Posterior vena cava (tissue), 2 donors: ENCODE measurements at regions of chr18 and their contacts with region 1.

Region 1: DNA sequence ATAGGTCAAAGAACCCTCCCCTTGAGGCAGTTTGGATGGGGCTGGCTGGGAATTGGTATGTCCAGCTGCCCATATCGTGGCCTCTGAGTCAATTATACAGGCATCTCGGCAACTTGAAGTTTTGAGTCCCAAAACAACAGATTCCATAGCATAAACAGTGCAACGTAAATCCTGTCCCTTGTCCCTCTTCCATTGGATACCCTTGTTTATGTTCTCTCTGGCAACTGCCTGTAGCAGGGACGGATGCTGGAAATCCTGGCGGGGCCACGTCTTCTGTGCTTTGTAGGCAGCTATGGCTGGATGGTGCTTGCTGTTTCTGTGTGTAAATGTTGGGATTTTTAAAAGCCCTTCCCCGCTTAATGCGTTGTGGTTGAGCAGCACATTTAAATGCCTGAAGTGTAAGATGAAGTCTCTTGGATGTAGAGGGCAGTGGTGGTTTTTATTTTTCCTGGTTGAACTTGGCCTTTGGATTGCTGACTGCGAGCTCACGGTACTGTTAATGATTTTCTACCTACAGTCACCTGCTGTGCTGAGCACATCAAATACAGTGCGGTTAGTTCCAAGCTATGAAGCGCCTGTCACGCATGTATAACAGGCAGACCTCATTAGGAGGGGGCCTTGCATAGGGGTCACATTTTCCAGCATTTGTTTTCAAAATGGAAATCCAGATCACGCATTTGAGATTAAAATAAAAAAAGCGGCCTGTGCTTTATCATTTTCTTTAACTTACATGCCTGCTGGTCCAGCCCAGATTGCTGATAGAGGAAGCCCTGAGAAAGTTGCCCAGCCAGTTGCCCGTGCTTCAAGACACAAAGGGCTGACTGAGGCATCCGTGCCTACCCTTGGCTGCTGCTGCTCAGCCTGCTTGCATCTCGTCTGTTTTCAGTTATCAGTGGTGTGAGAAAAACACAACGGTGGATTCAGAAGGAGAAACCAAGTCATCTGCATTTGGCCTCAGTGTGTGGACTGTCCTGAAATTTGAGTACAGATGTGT is 84.7 kb downstream of the NEDD4L start:
- DNase-seq: no peak

Region 2: DNA sequence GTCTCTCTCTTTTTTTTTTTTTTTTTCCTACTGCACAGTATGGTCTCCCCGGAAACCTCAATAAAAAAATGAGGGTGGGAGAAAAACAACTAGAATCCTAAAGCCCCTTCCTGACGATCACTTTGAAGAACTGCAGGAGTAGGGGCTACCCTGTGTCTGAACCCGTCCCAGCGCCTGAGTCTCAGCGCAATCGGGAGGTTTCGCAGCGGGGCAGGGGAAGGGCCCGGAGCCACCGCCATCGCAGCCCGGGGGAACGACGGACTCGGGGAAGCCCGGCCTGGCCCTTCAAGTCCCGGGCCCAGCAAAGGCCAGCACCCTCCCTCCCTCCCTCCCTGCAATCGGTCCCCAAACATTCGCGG is 507.5 kb before region 1 on chr18:
- intact Hi-C with region 1: loop called in 1 of 2 experiments (anchors 10 kb)
- DNase-seq: no peak

Region 3: DNA sequence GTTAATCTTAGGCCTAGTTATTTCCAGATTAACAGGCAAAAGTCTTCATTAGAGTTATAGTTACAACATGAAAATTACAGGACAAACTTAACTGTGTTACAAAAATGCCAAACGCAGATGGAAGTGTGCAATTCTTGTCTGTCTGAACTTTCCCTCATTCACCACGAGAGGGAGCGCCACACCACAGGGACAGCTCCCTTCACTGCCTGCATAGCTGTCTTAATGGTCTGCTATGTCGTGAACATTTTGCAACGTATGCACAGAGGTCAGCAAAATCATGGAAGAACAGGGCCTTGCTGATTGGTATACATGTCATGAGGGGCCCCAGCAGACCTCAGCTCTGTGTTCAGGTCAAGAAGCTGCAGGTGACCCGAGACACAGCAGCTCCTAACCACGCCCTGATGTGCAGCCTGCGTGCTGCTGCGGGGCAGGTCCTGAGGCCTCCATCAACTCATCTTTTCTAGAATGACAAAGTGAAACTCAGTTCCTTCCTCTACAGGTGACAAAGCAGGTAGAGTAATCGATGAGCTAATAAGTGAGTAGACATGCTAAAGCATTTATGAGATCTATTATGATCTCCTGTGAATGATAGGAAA is 246.8 kb before region 1 on chr18:
- intact Hi-C with region 1: loop called in 1 of 2 experiments (anchors 10 kb)
- DNase-seq: peak; percentile 86

Region 4: GRCh38 chr18:58043491-58044379 is 84.9 kb before region 1 on chr18 and contains the start of gene NEDD4L:
- intact Hi-C with region 1: loop called in 1 of 2 experiments (anchors 5 kb)
- DNase-seq: peak; percentile 94
- total RNA-seq, gene NEDD4L: 11.3 to 14.9 TPM